Sciatic nerve (tissue), 2 donors: ENCODE measurements at regions of chr18 and their contacts with region 1.

Region 1: DNA sequence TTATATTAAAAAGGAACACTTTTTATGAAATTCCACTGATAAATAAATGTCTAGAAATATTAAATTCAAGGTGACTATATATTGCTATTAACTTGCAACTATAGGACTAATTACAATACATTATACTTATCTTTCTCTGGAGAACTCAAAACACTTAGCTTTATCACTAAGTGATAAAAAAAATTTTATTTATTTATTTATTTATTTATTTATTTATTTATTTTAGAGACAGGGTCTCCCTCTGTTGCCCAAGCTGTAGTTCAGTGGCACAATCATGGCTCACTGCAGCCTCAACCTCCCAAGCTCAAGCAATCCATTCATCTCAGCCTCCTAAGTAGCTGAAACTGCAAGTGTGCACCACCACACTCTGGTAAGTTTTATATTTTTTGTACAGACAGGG is 451.1 kb downstream of the DSC3 start:
- DNase-seq: no peak
- ATAC-seq: no peak

Region 2: DNA sequence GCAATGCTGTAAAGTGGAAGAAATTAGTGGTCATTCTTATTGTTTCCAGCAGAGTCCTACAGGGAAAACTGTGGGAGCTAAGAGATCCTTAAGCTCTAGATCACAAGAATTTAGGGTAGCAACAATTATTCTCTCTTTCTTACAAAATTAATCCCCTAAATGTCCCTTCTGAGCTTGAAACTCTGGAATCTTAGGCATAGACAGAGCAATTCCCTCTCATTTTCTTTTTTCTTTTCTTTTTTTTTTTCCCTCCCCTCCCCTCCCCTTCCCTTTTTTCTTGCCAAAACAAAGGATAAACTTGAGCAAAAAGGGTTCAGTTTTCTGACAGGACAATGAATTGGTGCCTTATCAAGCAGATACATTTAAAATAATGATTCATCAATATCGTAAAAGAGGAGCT is 10.1 kb after region 1 on chr18:
- intact Hi-C with region 1: loop called (anchors 1 kb)
- DNase-seq: no peak
- ATAC-seq: no peak